ENCODE measurements at regions of chr13 and their contacts with region 1.

Region 1: GRCh38 chr13:29923554-29924481 is 73.4 kb upstream of the UBL3 start:
- DNase-seq: peak; percentile 93
- H3K4me3 ChIP-seq: no peak overlapping the region
- H3K27ac ChIP-seq: peak overlapping the region; percentile 62
- H3K4me1 ChIP-seq: peaks cover 17% of the 10 kb centered on the region
- H3K27me3 ChIP-seq: no peaks in the 10 kb centered on the region
- CTCF ChIP-seq: peak; percentile 94 to 96
- POLR2A ChIP-seq: no peak

Region 2: GRCh38 chr13:29411481-29411880 is 512.3 kb before region 1 on chr13:
- CTCF ChIA-PET with region 1: no interaction called
- POLR2A ChIA-PET with region 1: no interaction called
- dilution Hi-C with region 1: no loop called
- intact Hi-C with region 1: no loop called
- DNase-seq: no peak
- H3K4me3 ChIP-seq: no peak overlapping the region
- H3K27ac ChIP-seq: no peak overlapping the region
- H3K4me1 ChIP-seq: no peaks in the 10 kb centered on the region
- H3K27me3 ChIP-seq: no peaks in the 10 kb centered on the region
- CTCF ChIP-seq: no peak
- POLR2A ChIP-seq: no peak

Region 3: GRCh38 chr13:29771247-29771646 is 152.6 kb before region 1 on chr13:
- CTCF ChIA-PET with region 1: interaction called, 66 read pairs
- POLR2A ChIA-PET with region 1: no interaction called
- dilution Hi-C with region 1: no loop called
- intact Hi-C with region 1: loop called (anchors 1 kb)
- DNase-seq: peak; percentile 60
- H3K4me3 ChIP-seq: no peak overlapping the region
- H3K27ac ChIP-seq: no peak overlapping the region
- H3K4me1 ChIP-seq: no peaks in the 10 kb centered on the region
- H3K27me3 ChIP-seq: no peaks in the 10 kb centered on the region
- CTCF ChIP-seq: peak in 1 of 2 donors; percentile 13
- POLR2A ChIP-seq: no peak

Region 4: DNA sequence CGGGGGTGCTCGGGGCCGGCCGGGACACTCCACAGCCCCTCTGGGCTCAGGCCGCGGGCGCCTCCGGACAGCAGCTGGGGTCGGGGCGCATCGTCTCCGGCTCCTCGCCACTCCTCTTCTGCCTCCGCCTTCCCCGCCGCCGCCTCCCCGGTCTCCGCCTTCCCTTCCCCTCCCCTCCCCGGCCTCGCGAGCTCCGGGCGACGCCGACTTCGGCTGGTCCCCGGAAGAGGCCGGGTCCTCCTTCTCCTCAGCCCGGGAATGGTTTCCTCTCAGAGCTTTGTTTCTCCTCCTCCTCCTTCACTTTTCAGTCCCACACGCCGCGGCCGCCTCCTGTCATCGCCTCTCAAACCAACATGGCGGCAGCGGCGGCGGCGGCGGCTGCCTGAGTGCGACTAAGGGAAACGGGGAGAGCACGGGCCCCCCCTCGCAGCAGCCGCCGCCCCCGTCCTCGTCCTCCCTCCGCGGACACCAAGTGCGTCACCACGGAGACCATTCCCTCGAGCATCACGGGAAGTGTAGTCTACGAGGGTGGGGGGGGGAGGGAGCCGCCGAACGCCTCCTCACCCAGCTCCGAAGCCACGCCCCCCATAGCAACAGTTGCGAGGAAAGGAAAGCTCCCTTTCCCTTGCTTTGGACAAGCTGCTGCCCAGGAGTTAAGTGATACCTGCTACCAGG is 73.5 kb before region 1 on chr13 and contains the start of gene UBL3:
- CTCF ChIA-PET with region 1: interaction called, 66 read pairs
- POLR2A ChIA-PET with region 1: interaction called, 7 read pairs
- dilution Hi-C with region 1: no loop called
- intact Hi-C with region 1: loop called (anchors 1 kb)
- DNase-seq: peak; percentile 97
- H3K4me3 ChIP-seq: peak within 1 kb of the TSS; percentile 80 to 99 (median 98)
- H3K27ac ChIP-seq: peak within 1 kb of the TSS; percentile 83
- H3K4me1 ChIP-seq: peaks cover 22% of the 10 kb centered on the region
- H3K27me3 ChIP-seq: peaks cover 0 to 14% of the 10 kb centered on the region in 2 experiments
- CTCF ChIP-seq: no peak
- POLR2A ChIP-seq: peak; percentile 62
- total RNA-seq, gene UBL3: 11.1 and 11.8 TPM in 2 replicates

Region 5: DNA sequence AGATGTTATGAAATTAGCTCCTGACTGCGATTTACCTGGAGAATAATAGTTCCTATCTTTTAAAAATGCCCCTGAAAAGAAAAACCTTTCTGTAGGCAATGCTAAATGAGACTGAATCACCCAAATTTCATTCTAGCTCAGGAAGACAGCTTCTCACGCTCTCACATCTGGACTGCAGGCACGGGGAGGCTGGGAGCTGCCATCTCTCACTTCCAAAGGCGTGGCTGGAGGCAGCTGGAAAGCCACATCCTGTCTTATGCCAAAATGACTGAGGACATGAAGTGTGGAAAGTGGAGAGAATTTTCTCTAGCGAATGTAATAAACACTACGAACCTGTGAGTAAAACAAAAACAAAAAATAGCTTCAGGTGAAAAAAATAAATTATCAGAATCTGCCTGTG is 15.4 kb before region 1 on chr13:
- CTCF ChIA-PET with region 1: interaction called, 17 read pairs
- POLR2A ChIA-PET with region 1: no interaction called
- dilution Hi-C with region 1: no loop called
- intact Hi-C with region 1: no loop called
- DNase-seq: no peak
- H3K4me3 ChIP-seq: no peak overlapping the region
- H3K27ac ChIP-seq: no peak overlapping the region
- H3K4me1 ChIP-seq: no peaks in the 10 kb centered on the region
- H3K27me3 ChIP-seq: peaks cover 3 to 5% of the 10 kb centered on the region in 2 experiments
- CTCF ChIP-seq: no peak
- POLR2A ChIP-seq: no peak

Region 6: GRCh38 chr13:29935309-29935981 is 11.6 kb after region 1 on chr13:
- CTCF ChIA-PET with region 1: interaction called, 39 read pairs
- POLR2A ChIA-PET with region 1: no interaction called
- dilution Hi-C with region 1: no loop called
- intact Hi-C with region 1: no loop called
- DNase-seq: no peak
- H3K4me3 ChIP-seq: no peak overlapping the region
- H3K27ac ChIP-seq: no peak overlapping the region
- H3K4me1 ChIP-seq: no peaks in the 10 kb centered on the region
- H3K27me3 ChIP-seq: peaks cover 0 to 6% of the 10 kb centered on the region in 2 experiments
- CTCF ChIP-seq: no peak
- POLR2A ChIP-seq: no peak

Region 7: GRCh38 chr13:29940715-29941114 is 16.9 kb after region 1 on chr13:
- CTCF ChIA-PET with region 1: interaction called, 39 read pairs
- POLR2A ChIA-PET with region 1: no interaction called
- dilution Hi-C with region 1: no loop called
- intact Hi-C with region 1: no loop called
- DNase-seq: no peak
- H3K4me3 ChIP-seq: no peak overlapping the region
- H3K27ac ChIP-seq: no peak overlapping the region
- H3K4me1 ChIP-seq: no peaks in the 10 kb centered on the region
- H3K27me3 ChIP-seq: peaks cover 3 to 4% of the 10 kb centered on the region in 2 experiments
- CTCF ChIP-seq: no peak
- POLR2A ChIP-seq: no peak

Region 8: GRCh38 chr13:30114571-30115256 is 190.9 kb after region 1 on chr13:
- CTCF ChIA-PET with region 1: interaction called, 12 read pairs
- POLR2A ChIA-PET with region 1: no interaction called
- dilution Hi-C with region 1: no loop called
- intact Hi-C with region 1: loop called (anchors 1 kb)
- DNase-seq: peak; percentile 80
- H3K4me3 ChIP-seq: peak overlapping the region; percentile 5 to 45 (median 40)
- H3K27ac ChIP-seq: no peak overlapping the region
- H3K4me1 ChIP-seq: peaks cover 3% of the 10 kb centered on the region
- H3K27me3 ChIP-seq: peaks cover 38 to 47% of the 10 kb centered on the region in 2 experiments
- CTCF ChIP-seq: peak; percentile 94 to 95
- POLR2A ChIP-seq: no peak

Measured in endothelial cell of umbilical vein (primary cell).